ENCODE measurements at regions of chr10 and their contacts with region 1.

Region 1: GRCh38 chr10:12656518-12657142 is 307.3 kb downstream of the CAMK1D start:
- DNase-seq: peak; percentile 29
- H3K4me3 ChIP-seq: no peak overlapping the region
- CTCF ChIP-seq: peak; percentile 48

Region 2: GRCh38 chr10:12264204-12264940 is 392.3 kb before region 1 on chr10:
- CTCF ChIA-PET with region 1: interaction called, 75 read pairs
- POLR2A ChIA-PET with region 1: no interaction called
- DNase-seq: no peak
- H3K4me3 ChIP-seq: peak overlapping the region; percentile 53
- CTCF ChIP-seq: peak; percentile 89

Region 3: GRCh38 chr10:12638103-12638502 is 18.5 kb before region 1 on chr10:
- CTCF ChIA-PET with region 1: interaction called, 96 read pairs
- POLR2A ChIA-PET with region 1: no interaction called
- DNase-seq: no peak
- H3K4me3 ChIP-seq: no peak overlapping the region
- CTCF ChIP-seq: no peak

Region 4: DNA sequence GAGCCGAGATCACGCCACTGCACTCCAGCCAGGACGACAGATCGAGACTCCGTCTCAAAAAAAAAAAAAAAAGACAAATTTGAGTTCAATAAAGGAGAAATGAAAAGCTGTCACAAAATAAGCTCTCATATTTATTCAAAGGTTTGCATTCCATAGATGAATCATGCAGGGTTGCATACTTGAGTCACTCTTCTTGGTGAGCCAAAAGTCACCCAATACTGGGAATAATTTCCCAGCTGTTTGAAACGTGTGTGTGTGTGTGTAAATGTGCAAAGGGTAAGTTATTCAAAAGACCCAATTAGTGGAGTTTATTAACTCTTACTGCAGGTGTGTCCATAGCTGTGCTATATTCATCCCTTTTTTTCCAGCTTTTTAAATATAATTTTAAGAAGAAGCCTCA is 47.2 kb after region 1 on chr10:
- CTCF ChIA-PET with region 1: interaction called, 19 read pairs
- POLR2A ChIA-PET with region 1: no interaction called
- DNase-seq: peak; percentile 33
- H3K4me3 ChIP-seq: no peak overlapping the region
- CTCF ChIP-seq: no peak